ENCODE measurements at regions of chr9 and their contacts with region 1.

Region 1: DNA sequence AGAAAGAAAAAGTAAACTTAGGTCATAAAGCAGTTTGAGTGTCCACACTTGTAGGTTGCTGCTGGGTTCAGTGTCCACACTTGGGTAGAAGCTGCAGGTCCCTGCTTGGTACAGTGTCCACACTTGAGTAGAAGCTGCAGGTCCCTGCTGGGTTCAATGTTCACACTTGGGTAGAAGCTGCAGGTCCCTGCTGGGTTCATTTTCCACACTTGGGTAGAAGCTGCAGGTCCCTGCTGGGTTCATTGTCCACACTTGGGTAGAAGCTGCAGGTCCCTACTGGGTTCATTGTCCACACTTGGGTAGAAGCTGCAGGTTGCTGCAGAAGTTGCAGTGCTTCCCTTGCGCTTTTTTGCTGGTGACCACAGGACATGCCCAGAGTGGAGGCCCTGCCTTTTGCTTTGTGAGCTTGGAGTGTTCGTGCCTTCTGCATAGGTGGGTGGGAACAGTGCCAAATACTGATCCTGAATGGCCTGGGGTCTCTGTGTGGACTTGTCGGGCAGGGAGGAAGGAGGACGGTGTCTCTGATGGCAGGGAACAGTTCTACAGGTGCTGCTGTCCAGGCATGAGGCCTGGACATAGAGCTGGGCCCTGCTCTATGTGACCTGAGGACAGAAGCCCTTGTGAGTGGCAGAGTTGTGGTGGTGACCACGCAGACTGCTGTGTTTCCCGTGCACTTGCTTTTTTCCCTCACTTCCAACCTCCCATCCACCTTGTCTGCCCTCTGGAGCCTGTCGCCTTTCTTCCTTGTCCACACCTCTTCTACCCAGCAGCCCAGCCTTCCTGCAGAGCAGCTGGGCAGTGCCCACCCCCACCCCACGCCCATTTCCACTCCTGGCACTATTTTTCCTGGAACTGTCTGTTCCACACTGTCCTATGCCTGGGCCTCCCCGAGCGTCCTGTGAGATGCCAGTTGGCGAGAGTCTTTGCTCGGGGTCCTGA is 120.8 kb downstream of the EHMT1 start:
- DNase-seq: no peak
- H3K4me3 ChIP-seq: no peak overlapping the region
- CTCF ChIP-seq: no peak

Region 2: GRCh38 chr9:137797206-137798120 is 57.8 kb after region 1 on chr9:
- in situ Hi-C with region 1: loop called (anchors 5 kb)
- DNase-seq: no peak
- H3K4me3 ChIP-seq: no peak overlapping the region
- CTCF ChIP-seq: no peak

Measured in astrocyte of the cerebellum (primary cell).